ENCODE measurements at regions of chr4 and their contacts with region 1.

Region 1: GRCh38 chr4:83284193-83285054 is at the start of gene COQ2:
- DNase-seq: peak; percentile 94
- ATAC-seq: peak; percentile 93
- H3K4me3 Mint-ChIP-seq: peak within 1 kb of the TSS; percentile 86
- H3K27ac Mint-ChIP-seq: peak within 1 kb of the TSS; percentile 81
- H3K4me1 Mint-ChIP-seq: peaks cover 18% of the 10 kb centered on the region
- H3K27me3 Mint-ChIP-seq: peaks cover 11% of the 10 kb centered on the region
- CTCF ChIP-seq: no peak
- total RNA-seq, gene COQ2: 20.5 to 22.8 TPM (median 21.6 TPM) in 3 replicates

Region 2: DNA sequence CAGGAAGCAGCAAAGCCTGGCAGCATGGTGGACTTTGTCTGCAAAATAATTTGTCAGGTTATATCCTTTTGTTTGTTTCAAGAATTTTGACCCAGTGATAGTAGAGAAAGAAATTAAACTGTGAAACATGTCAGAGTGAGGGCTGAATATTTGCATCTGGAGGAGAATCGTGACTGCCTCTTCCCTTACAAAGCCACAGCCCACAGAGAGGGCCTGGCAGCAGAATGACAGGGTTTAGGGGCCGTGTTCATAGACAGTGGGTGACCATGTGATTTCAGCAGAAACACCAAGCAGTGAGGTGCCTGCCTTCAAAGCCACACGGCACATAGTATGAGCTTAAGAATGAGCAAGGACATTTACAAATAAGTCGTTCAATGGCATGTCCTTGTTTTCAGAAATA is 145.5 kb before region 1 on chr4:
- CTCF ChIA-PET with region 1: no interaction called
- POLR2A ChIA-PET with region 1: no interaction called
- DNase-seq: no peak
- ATAC-seq: no peak
- H3K4me3 Mint-ChIP-seq: no peak overlapping the region
- H3K27ac Mint-ChIP-seq: no peak overlapping the region
- H3K4me1 Mint-ChIP-seq: no peaks in the 10 kb centered on the region
- H3K27me3 Mint-ChIP-seq: peaks cover 3% of the 10 kb centered on the region; the same call in 1 of the 2 replicates
- CTCF ChIP-seq: no peak

Region 3: DNA sequence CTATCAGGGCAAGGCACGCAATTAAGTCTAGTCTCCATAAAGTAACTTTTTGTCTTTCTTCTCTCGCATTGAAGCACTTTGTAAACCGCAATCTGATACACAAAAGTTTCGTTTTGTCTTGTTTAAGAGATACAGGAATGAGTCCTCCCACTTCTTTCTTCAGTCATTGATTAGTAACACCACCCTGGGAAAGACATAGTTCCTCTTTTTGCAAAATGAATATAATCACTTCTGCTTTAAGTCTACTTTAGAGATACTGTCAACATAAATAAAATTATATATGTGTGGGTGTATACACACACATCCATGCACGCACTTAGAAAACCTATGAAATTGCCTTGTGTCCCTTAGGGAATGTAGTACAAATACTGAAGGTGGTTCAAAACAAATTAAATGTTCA is 11.5 kb before region 1 on chr4:
- CTCF ChIA-PET with region 1: interaction called, 15 read pairs
- POLR2A ChIA-PET with region 1: no interaction called
- DNase-seq: no peak
- ATAC-seq: no peak
- H3K4me3 Mint-ChIP-seq: no peak overlapping the region
- H3K27ac Mint-ChIP-seq: no peak overlapping the region
- H3K4me1 Mint-ChIP-seq: no peaks in the 10 kb centered on the region
- H3K27me3 Mint-ChIP-seq: no peaks in the 10 kb centered on the region
- CTCF ChIP-seq: no peak

Region 4: GRCh38 chr4:83308672-83309071 is 24.2 kb after region 1 on chr4:
- CTCF ChIA-PET with region 1: interaction called, 13 read pairs
- POLR2A ChIA-PET with region 1: interaction called, 4 read pairs
- DNase-seq: peak; percentile 38
- ATAC-seq: peak; percentile 99
- H3K4me3 Mint-ChIP-seq: no peak overlapping the region
- H3K27ac Mint-ChIP-seq: no peak overlapping the region
- H3K4me1 Mint-ChIP-seq: peaks cover 27% of the 10 kb centered on the region
- H3K27me3 Mint-ChIP-seq: no peaks in the 10 kb centered on the region
- CTCF ChIP-seq: no peak

Measured in WTC11 (cell line).